CD14-positive monocyte (primary cell): ENCODE measurements at regions of chr2 and their contacts with region 1.

Region 1: GRCh38 chr2:197378494-197379307 is 56.1 kb downstream of the SF3B1 start:
- DNase-seq: peak; percentile 16 to 40 (median 38)
- H3K4me3 ChIP-seq: no peak overlapping the region
- H3K4me3 Mint-ChIP-seq: no peak overlapping the region
- H3K27ac ChIP-seq: no peak overlapping the region
- H3K27ac Mint-ChIP-seq: no peak overlapping the region
- H3K4me1 ChIP-seq: no peaks in the 10 kb centered on the region
- H3K4me1 Mint-ChIP-seq: peaks cover 1% of the 10 kb centered on the region
- H3K27me3 ChIP-seq: no peaks in the 10 kb centered on the region
- H3K27me3 Mint-ChIP-seq: peaks cover 0 to 1% (median 0%) of the 10 kb centered on the region in 3 donors
- CTCF ChIP-seq: peak; percentile 80

Region 2: DNA sequence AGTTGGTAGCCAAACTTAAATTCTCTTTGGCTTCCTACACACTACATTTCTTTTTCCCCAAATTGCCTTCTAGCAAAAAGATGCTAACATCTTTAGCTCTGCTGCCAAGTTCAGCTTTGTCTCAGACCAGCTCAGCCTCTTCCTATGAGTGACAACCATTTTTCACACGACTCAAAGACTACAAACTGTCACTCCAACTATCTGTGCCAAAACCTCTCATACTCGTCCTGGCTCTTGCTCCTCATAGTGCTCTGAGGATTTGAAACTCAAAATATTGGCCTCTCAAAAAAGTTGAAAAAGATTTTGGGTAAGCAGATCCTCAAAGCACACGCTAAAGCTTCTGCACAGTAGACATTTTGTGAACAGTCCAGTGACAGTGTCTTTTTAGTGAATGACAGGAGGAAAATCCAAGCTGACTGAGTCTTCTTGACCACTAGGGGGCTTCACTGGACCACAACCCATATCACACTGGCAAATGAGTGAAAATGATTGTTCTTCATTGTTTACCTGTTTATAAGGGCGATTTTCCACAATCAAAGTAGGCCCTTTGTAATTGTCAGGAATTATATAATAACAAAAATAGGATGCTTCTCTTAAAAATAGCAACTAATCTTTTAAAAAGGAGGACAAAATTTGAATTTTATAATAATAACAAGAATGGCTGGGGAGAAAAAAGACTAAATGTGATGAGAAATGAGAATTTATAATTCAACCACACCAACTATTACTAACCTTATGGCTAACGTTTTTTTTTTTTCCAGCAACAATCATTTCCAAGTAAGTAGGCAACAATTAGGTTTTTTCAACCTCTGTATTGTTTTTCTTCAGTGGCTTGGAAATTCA is 366.7 kb before region 1 on chr2:
- intact Hi-C with region 1: loop called (anchors 10 kb)
- DNase-seq: peak; percentile 9 to 38 (median 34)
- H3K4me3 ChIP-seq: no peak overlapping the region
- H3K4me3 Mint-ChIP-seq: no peak overlapping the region
- H3K27ac ChIP-seq: no peak overlapping the region
- H3K27ac Mint-ChIP-seq: peak overlapping the region in 1 of 7 donors; percentile 15
- H3K4me1 ChIP-seq: no peaks in the 10 kb centered on the region
- H3K4me1 Mint-ChIP-seq: no peaks in the 10 kb centered on the region
- H3K27me3 ChIP-seq: no peaks in the 10 kb centered on the region
- H3K27me3 Mint-ChIP-seq: no peaks in the 10 kb centered on the region
- CTCF ChIP-seq: peak; percentile 77

Region 3: GRCh38 chr2:197113275-197113711 is 265.4 kb before region 1 on chr2:
- intact Hi-C with region 1: loop called (anchors 5 to 10 kb)
- DNase-seq: peak in 2 of 3 donors; percentile 25 to 53
- H3K4me3 ChIP-seq: no peak overlapping the region
- H3K4me3 Mint-ChIP-seq: no peak overlapping the region
- H3K27ac ChIP-seq: peak overlapping the region in 1 of 2 donors; percentile 29
- H3K27ac Mint-ChIP-seq: peak overlapping the region in 2 of 7 donors; percentile 55 to 62
- H3K4me1 ChIP-seq: no peaks in the 10 kb centered on the region
- H3K4me1 Mint-ChIP-seq: no peaks in the 10 kb centered on the region
- H3K27me3 ChIP-seq: no peaks in the 10 kb centered on the region
- H3K27me3 Mint-ChIP-seq: no peaks in the 10 kb centered on the region
- CTCF ChIP-seq: peak; percentile 83

Region 4: GRCh38 chr2:197184959-197185586 is 193.6 kb before region 1 on chr2:
- intact Hi-C with region 1: loop called in 1 of 2 experiments (anchors 10 kb)
- DNase-seq: peak in 1 of 3 donors; percentile 20
- H3K4me3 ChIP-seq: no peak overlapping the region
- H3K4me3 Mint-ChIP-seq: no peak overlapping the region
- H3K27ac ChIP-seq: peak overlapping the region; percentile 15 to 26
- H3K27ac Mint-ChIP-seq: peak overlapping the region in 4 of 7 donors; percentile 10 to 63 (median 36)
- H3K4me1 ChIP-seq: peaks cover 0 to 3% of the 10 kb centered on the region in 2 donors
- H3K4me1 Mint-ChIP-seq: peaks cover 20% of the 10 kb centered on the region
- H3K27me3 ChIP-seq: no peaks in the 10 kb centered on the region
- H3K27me3 Mint-ChIP-seq: no peaks in the 10 kb centered on the region
- CTCF ChIP-seq: no peak

Region 5: GRCh38 chr2:197547163-197547900 is 168.6 kb after region 1 on chr2:
- intact Hi-C with region 1: no loop called
- DNase-seq: no peak
- H3K4me3 ChIP-seq: no peak overlapping the region
- H3K4me3 Mint-ChIP-seq: no peak overlapping the region
- H3K27ac ChIP-seq: peak overlapping the region in 1 of 2 donors; percentile 16
- H3K27ac Mint-ChIP-seq: peak overlapping the region in 4 of 7 donors; percentile 3 to 67 (median 53)
- H3K4me1 ChIP-seq: no peaks in the 10 kb centered on the region
- H3K4me1 Mint-ChIP-seq: peaks cover 3% of the 10 kb centered on the region
- H3K27me3 ChIP-seq: no peaks in the 10 kb centered on the region
- H3K27me3 Mint-ChIP-seq: no peaks in the 10 kb centered on the region
- CTCF ChIP-seq: no peak